ENCODE measurements at regions of chr11 and their contacts with region 1.

Region 1: DNA sequence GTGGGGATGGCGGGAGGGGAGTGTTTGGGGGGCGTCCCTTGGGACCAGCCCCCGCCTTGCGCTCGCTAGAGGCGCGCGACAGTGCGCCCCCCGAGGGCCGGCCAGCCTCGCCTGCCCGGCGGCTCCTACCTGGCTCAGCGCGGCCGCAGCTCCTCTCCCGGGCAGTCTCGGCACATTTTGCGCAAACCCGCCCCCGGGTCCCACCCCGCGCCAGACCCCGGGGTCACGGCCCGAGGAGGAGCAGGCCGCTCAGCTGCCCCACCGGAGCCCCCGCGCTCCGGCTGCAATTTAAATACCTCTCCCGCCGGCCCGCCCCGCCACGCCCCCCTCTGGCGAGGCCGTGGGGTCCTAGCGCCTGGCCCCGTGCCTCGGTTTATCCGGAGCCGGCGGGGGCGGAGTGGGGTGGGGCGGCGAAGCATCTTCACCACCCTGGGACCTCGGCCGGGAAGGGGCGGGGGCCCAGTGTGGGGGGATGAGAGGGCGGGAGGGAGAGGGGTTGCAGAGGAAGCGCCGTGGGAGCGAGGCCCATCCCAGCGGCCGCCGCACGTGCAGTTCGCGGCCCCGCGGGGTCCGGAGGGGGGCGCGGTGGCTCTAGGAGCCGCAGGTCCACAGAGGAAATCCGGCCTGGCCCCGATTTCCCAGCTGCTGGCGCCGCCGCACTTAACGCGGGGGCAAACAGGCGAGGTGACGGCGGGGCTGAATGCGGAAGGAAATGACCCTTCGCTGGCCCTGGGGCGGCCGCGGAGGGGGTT is at the start of gene LRRC32:
- DNase-seq: peak; percentile 52
- ATAC-seq: no peak
- H3K4me3 ChIP-seq: peak within 1 kb of the TSS in 4 of 5 experiments; percentile 32 to 52 (median 41)
- H3K4me3 Mint-ChIP-seq: peak within 1 kb of the TSS; percentile 84
- H3K27ac ChIP-seq: peak within 1 kb of the TSS in 1 of 2 donors; percentile 15
- H3K27ac Mint-ChIP-seq: peak within 1 kb of the TSS; percentile 41
- H3K4me1 ChIP-seq: peaks cover 88 to 93% of the 10 kb centered on the region in 2 donors
- H3K4me1 Mint-ChIP-seq: peaks cover 87% of the 10 kb centered on the region
- H3K27me3 ChIP-seq: peaks cover 0 to 56% (median 27%) of the 10 kb centered on the region in 4 experiments
- H3K27me3 Mint-ChIP-seq: peaks cover 43% of the 10 kb centered on the region
- CTCF ChIP-seq: no peak
- total RNA-seq, gene LRRC32: 1.0 and 1.4 TPM in 2 replicates

Region 2: DNA sequence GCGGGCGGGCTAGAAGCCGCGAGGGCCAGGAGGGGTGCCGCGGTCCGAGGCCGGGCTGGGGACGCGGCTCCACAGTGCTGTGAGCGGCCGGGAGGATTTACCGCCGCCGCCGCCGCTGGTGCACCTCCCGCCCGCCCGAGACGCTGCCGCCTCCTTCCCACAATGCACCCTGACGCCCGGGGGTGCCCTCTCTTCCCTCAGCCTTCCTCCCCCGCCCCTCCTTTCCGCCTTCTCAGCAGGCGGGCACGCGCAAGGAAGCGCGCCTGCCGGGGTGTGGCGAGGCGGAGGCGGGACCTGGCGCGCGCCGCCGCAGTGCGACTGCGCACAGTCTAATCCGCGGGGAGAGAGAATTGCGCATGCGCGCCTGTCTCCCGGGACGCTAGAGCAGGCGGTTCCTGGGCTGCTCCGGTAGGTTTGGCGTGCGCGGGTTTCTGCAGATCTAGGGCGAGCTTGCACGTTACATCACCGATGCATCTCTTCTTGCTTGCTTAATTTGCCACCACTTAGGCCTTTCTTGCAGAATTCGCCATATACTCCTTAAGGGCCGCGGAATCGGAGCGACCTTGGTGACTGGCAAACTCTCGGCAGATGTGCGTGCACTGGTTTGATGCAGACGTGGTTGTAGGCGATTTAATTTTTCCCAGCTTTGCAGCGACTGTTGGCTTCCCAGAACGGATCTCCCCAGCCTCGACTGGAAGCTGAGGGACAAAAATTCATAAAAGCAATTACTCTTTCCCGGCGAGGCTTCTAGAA is 289.5 kb before region 1 on chr11 and contains the starts of genes GVQW3 and THAP12:
- CTCF ChIA-PET with region 1: interaction called, 3 read pairs
- POLR2A ChIA-PET with region 1: no interaction called
- intact Hi-C with region 1: loop called (anchors 5 kb)
- DNase-seq: peak; percentile 99
- ATAC-seq: peak; percentile 88
- H3K4me3 ChIP-seq: peak within 1 kb of the TSS; percentile 61 to 98 (median 73)
- H3K4me3 Mint-ChIP-seq: peak within 1 kb of the TSS; percentile 98
- H3K27ac ChIP-seq: peak within 1 kb of the TSS in 1 of 2 donors; percentile 82
- H3K27ac Mint-ChIP-seq: peak within 1 kb of the TSS; percentile 94
- H3K4me1 ChIP-seq: peaks cover 34 to 39% of the 10 kb centered on the region in 2 donors
- H3K4me1 Mint-ChIP-seq: peaks cover 74% of the 10 kb centered on the region
- H3K27me3 ChIP-seq: no peaks in the 10 kb centered on the region
- H3K27me3 Mint-ChIP-seq: no peaks in the 10 kb centered on the region
- CTCF ChIP-seq: no peak
- total RNA-seq, gene GVQW3: 8.2 TPM in 2 replicates
- total RNA-seq, gene THAP12: 52.9 and 55.6 TPM in 2 replicates

Region 3: DNA sequence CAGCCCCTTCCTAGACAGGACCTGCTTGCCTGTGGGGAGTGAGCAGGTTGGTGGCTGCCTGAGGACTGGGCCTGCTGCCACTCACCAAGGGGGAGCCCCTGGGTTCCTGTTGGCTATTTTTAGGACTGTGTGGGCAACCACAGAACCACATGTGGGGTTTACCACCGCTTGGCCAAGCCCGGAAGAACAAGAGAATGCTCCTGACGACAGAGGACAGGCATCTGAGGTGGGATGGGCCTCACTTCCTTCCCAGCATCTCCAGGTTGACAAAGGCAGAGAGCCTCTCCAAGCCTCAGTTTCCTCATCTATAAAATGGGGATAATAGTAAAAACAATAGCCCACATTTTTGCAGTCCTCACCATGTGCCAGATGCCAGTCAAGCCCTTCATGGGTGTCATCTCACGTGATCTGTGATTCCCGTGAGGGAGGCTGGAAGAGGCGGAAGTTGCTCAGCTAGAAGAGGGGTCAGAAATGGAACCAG is 43.7 kb before region 1 on chr11:
- CTCF ChIA-PET with region 1: interaction called, 5 read pairs
- POLR2A ChIA-PET with region 1: interaction called, 13 read pairs
- intact Hi-C with region 1: loop called (anchors 1 kb)
- DNase-seq: peak; percentile 93
- ATAC-seq: peak; percentile 63
- H3K4me3 ChIP-seq: peak overlapping the region in 1 of 5 experiments; percentile 30
- H3K4me3 Mint-ChIP-seq: peak overlapping the region; percentile 81
- H3K27ac ChIP-seq: peak overlapping the region in 1 of 2 donors; percentile 63
- H3K27ac Mint-ChIP-seq: peak overlapping the region; percentile 96
- H3K4me1 ChIP-seq: peaks cover 52 to 56% of the 10 kb centered on the region in 2 donors
- H3K4me1 Mint-ChIP-seq: peaks cover 65% of the 10 kb centered on the region
- H3K27me3 ChIP-seq: peaks cover 0 to 19% (median 0%) of the 10 kb centered on the region in 4 experiments
- H3K27me3 Mint-ChIP-seq: peaks cover 27% of the 10 kb centered on the region
- CTCF ChIP-seq: no peak

Region 4: GRCh38 chr11:76637491-76638269 is 33.0 kb before region 1 on chr11:
- CTCF ChIA-PET with region 1: interaction called, 20 read pairs
- POLR2A ChIA-PET with region 1: interaction called, 21 read pairs
- intact Hi-C with region 1: loop called (anchors 1 kb)
- DNase-seq: peak; percentile 91
- ATAC-seq: peak; percentile 92
- H3K4me3 ChIP-seq: peak overlapping the region in 2 of 5 experiments; percentile 25 to 35
- H3K4me3 Mint-ChIP-seq: peak overlapping the region; percentile 78
- H3K27ac ChIP-seq: peak overlapping the region; percentile 50 to 72
- H3K27ac Mint-ChIP-seq: peak overlapping the region; percentile 93
- H3K4me1 ChIP-seq: peaks cover 53 to 55% of the 10 kb centered on the region in 2 donors
- H3K4me1 Mint-ChIP-seq: peaks cover 69% of the 10 kb centered on the region
- H3K27me3 ChIP-seq: no peaks in the 10 kb centered on the region
- H3K27me3 Mint-ChIP-seq: peaks cover 18% of the 10 kb centered on the region
- CTCF ChIP-seq: no peak

Region 5: GRCh38 chr11:76656571-76657081 is 14.0 kb before region 1 on chr11:
- CTCF ChIA-PET with region 1: interaction called, 3 read pairs
- POLR2A ChIA-PET with region 1: no interaction called
- intact Hi-C with region 1: loop called (anchors 1 kb)
- DNase-seq: no peak
- ATAC-seq: no peak
- H3K4me3 ChIP-seq: no peak overlapping the region
- H3K4me3 Mint-ChIP-seq: no peak overlapping the region
- H3K27ac ChIP-seq: no peak overlapping the region
- H3K27ac Mint-ChIP-seq: no peak overlapping the region
- H3K4me1 ChIP-seq: peaks cover 21% of the 10 kb centered on the region in 2 donors
- H3K4me1 Mint-ChIP-seq: peaks cover 21% of the 10 kb centered on the region
- H3K27me3 ChIP-seq: peaks cover 0 to 25% (median 4%) of the 10 kb centered on the region in 4 experiments
- H3K27me3 Mint-ChIP-seq: peaks cover 21% of the 10 kb centered on the region
- CTCF ChIP-seq: no peak

Region 6: GRCh38 chr11:76955459-76956114 is 284.9 kb after region 1 on chr11:
- CTCF ChIA-PET with region 1: no interaction called
- POLR2A ChIA-PET with region 1: no interaction called
- intact Hi-C with region 1: no loop called
- DNase-seq: no peak
- ATAC-seq: no peak
- H3K4me3 ChIP-seq: no peak overlapping the region
- H3K4me3 Mint-ChIP-seq: no peak overlapping the region
- H3K27ac ChIP-seq: no peak overlapping the region
- H3K27ac Mint-ChIP-seq: no peak overlapping the region
- H3K4me1 ChIP-seq: no peaks in the 10 kb centered on the region
- H3K4me1 Mint-ChIP-seq: no peaks in the 10 kb centered on the region
- H3K27me3 ChIP-seq: no peaks in the 10 kb centered on the region
- H3K27me3 Mint-ChIP-seq: no peaks in the 10 kb centered on the region
- CTCF ChIP-seq: no peak

Measured in B cell (primary cell).